Activated naive CD8-positive, alpha-beta T cell treated with anti-CD3 and anti-CD28 coated beads, Interleukin-2, amount 10 ng/mL, durations not matched to agents 7 days and 5 days (primary cell): ENCODE measurements at regions of chr1 and their contacts with region 1.

Region 1: GRCh38 chr1:151281969-151282882 is at the start of gene ZNF687:
- DNase-seq: peak; percentile 97
- ATAC-seq: peak; percentile 94
- H3K4me3 Mint-ChIP-seq: peak within 1 kb of the TSS; percentile 99
- H3K27ac Mint-ChIP-seq: peak within 1 kb of the TSS; percentile 98
- H3K4me1 Mint-ChIP-seq: peaks cover 20% of the 10 kb centered on the region
- H3K27me3 Mint-ChIP-seq: no peaks in the 10 kb centered on the region
- total RNA-seq, gene ZNF687: 35.5 to 37.0 TPM

Region 2: DNA sequence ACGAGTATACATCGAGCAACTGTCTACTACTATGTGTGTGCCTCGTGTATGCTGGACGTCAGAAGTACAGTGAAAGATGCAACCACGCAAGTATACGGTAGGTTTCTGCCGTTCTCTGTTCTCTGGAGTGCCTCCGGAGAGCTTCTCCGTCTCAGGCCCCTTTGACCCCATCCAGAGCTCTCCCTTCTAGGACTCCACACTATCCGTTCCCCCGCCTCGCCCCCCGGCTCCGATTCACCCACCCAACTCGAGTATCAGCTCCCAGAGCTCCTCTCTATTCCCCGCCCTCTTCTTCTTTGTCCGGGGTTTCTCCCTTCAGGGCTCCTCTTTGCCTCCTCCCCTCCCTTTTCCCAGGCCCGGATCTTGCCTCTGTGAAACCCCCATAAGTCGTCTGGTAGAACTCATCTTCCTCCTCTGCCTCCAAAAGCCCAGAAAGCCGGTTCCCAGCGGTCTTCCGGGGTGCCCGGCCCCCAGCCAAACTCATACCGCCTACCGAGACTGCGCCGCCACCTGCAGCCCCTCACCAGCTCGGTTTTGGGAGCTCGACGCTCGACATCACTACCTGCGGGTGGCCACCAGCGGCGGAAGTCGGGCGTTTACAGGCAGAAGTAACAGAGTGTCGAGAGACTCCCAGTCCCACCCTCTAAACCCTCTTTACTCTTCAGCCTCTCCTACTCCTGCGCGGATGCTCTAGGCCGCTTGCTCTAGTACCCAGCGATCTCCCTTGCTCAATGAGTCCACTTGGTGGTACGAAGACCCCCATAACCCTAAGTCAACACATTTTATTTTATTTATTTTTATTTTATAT is 92.4 kb before region 1 on chr1 and contains the start of gene VPS72:
- POLR2A ChIA-PET with region 1: interaction called, 10 read pairs
- DNase-seq: peak; percentile 85
- ATAC-seq: peak; percentile 94
- H3K4me3 Mint-ChIP-seq: peak within 1 kb of the TSS; percentile 97
- H3K27ac Mint-ChIP-seq: peak within 1 kb of the TSS; percentile 98
- H3K4me1 Mint-ChIP-seq: peaks cover 18% of the 10 kb centered on the region
- H3K27me3 Mint-ChIP-seq: peaks cover 15% of the 10 kb centered on the region
- total RNA-seq, gene VPS72: 67.4 to 86.9 TPM

Region 3: GRCh38 chr1:151254217-151255213 is 27.7 kb before region 1 on chr1 and contains the start of gene PSMD4:
- POLR2A ChIA-PET with region 1: interaction called, 22 read pairs
- DNase-seq: peak; percentile 86
- ATAC-seq: peak; percentile 97
- H3K4me3 Mint-ChIP-seq: peak within 1 kb of the TSS; percentile 91
- H3K27ac Mint-ChIP-seq: peak within 1 kb of the TSS; percentile 90
- H3K4me1 Mint-ChIP-seq: peaks cover 20% of the 10 kb centered on the region
- H3K27me3 Mint-ChIP-seq: no peaks in the 10 kb centered on the region
- total RNA-seq, gene PSMD4: 170 to 174 TPM

Region 4: DNA sequence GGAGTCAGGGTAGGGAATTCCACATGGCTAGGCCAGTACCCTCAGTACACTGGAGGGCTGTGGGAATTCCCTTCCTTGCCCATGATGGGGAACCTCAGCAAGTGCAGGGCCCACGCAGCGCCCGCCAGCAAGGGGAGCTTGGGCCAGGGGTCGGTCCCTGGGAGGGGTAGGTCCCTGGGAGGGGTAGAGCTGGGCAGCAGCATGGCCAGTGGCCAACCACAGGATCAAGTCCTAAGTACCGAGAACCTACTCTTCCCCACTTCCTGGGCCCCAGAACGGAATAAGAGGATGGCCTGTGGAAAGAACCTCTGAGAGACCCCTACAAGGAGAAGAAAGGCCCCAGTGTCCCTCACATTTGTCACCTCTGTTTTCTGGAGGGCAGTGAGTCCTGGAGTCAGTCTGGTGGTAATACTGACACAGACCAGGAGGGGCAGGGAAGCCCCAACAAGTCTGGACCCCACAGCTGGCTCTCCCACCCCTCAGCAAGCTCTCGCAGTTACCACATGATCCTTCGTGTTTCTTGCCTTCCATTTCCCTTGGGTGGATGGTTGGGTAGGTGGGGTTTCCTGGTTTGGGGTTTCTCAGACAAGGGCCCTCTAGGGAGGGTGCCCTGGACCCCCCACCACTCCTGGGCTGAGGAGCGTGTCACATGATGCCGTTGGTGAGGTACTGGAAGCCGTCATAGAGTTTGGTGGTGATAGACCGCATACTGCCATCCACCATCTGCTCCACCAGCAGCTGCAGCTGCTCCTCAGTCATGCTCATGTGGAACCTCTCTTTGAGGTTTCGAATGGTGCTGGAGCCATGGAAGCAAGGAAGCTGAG is 10.2 kb after region 1 on chr1:
- POLR2A ChIA-PET with region 1: interaction called, 22 read pairs
- DNase-seq: no peak
- ATAC-seq: no peak
- H3K4me3 Mint-ChIP-seq: no peak overlapping the region
- H3K27ac Mint-ChIP-seq: peak overlapping the region; percentile 43
- H3K4me1 Mint-ChIP-seq: peaks cover 2% of the 10 kb centered on the region
- H3K27me3 Mint-ChIP-seq: no peaks in the 10 kb centered on the region

Region 5: DNA sequence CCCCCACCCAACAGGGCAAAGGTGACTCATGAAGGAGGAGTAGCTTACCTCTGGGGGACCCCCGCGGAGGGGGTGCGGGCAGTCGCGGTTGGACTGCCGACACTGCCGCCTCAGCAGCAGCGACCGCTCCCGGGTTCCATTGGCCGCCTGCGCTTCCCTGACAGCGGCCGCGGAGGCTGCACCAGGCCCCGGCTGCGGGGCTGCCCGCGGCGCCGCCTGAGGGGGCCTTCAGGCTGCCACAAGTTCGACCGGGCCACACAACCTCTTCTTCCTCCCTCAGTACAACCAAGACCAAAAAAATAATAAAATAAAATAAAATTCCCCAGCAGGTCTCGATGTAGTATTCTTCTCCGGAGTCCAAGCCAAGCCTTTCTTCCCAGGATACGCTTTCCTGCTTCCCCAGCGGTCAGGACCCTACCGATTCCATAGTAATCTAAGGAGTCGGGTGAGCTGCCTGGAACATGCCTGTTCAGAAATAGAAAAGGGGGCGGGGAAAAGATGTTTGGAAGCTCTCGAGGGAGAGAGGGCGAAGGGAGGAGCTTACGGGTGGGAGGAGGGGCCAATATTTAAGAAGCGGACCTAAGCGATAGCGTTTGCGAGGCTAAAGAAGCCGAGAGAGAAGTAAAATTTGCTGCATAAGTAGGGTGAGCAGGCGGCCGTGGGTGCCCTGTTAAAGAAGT is 45.1 kb after region 1 on chr1 and contains the start of gene PI4KB:
- POLR2A ChIA-PET with region 1: interaction called, 13 read pairs
- DNase-seq: peak; percentile 87
- ATAC-seq: peak; percentile 91
- H3K4me3 Mint-ChIP-seq: peak within 1 kb of the TSS; percentile 99
- H3K27ac Mint-ChIP-seq: peak within 1 kb of the TSS; percentile 97
- H3K4me1 Mint-ChIP-seq: peaks cover 28% of the 10 kb centered on the region
- H3K27me3 Mint-ChIP-seq: no peaks in the 10 kb centered on the region
- total RNA-seq, gene PI4KB: 73.8 to 75.7 TPM

Region 6: DNA sequence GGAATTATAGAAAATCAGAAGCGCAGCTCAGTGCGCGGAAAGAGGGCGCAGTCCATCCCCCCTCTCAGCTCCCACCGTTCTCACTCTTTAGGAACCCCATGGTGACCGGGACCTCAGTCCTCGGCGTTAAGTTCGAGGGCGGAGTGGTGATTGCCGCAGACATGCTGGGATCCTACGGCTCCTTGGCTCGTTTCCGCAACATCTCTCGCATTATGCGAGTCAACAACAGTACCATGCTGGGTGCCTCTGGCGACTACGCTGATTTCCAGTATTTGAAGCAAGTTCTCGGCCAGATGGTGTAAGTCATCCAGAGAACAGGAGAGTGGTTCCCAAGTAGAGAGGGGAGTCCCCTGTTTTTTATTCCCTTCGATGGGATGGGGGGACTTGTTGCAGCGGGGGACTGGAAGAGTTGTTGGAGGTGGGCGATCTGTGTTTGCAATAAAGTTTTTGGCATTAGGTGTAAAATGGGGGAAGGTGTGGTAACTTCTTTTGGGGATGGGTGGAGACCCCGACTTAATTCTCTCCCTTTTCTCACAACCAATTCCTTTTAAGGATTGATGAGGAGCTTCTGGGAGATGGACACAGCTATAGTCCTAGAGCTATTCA is 117.8 kb after region 1 on chr1:
- POLR2A ChIA-PET with region 1: interaction called, 14 read pairs
- DNase-seq: no peak
- ATAC-seq: peak; percentile 14
- H3K4me3 Mint-ChIP-seq: peak overlapping the region; percentile 94
- H3K27ac Mint-ChIP-seq: peak overlapping the region; percentile 100
- H3K4me1 Mint-ChIP-seq: peaks cover 17% of the 10 kb centered on the region
- H3K27me3 Mint-ChIP-seq: no peaks in the 10 kb centered on the region